B cell (primary cell): ENCODE measurements at regions of chr11 and their contacts with region 1.

Region 1: DNA sequence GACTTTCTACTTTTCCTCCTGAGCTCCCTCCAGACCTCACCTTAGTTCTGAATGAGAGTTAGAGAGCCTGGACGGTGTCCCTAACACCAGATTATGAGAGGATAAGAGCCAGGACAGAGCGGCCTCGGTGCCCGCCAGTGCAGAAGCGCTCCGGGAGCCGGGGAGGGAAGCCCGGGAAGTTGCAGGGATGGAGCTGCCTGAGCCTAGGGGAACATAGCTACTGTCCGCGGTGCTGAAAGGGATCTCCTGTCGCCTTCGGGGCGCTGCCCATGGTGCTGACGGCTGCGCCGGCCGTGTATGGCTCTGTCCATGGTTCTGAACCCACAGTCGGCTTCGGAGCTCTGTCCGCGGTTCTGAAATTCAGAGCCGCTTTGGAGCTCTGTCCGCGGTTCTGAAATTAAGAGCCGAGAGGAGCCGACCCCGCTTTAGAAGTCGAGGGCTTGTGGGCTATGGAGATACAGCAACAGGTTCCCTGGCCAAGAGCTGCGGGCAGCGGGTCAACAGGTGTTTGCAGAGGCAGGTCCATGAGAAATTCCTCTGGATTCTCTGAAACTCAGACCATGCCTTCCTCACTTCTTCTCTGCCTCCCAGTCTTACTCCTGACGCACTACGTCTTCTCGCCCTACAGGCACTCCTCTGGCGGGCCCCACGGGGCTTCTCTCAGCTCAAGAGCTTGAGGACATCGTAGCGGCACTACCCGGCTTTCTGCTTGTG is 814 bp downstream of the NPAS4 start:
- DNase-seq: peak; percentile 92
- ATAC-seq: peak; percentile 95
- H3K4me3 ChIP-seq: no peak overlapping the region
- H3K4me3 Mint-ChIP-seq: no peak overlapping the region
- H3K27ac ChIP-seq: no peak overlapping the region
- H3K27ac Mint-ChIP-seq: peak overlapping the region; percentile 81
- H3K4me1 ChIP-seq: peaks cover 8 to 15% of the 10 kb centered on the region in 2 donors
- H3K4me1 Mint-ChIP-seq: peaks cover 3% of the 10 kb centered on the region
- H3K27me3 ChIP-seq: peaks cover 0 to 45% (median 34%) of the 10 kb centered on the region in 4 experiments
- H3K27me3 Mint-ChIP-seq: peaks cover 31% of the 10 kb centered on the region
- CTCF ChIP-seq: no peak

Region 2: GRCh38 chr11:65454696-65455456 is 966.8 kb before region 1 on chr11:
- CTCF ChIA-PET with region 1: no interaction called
- POLR2A ChIA-PET with region 1: interaction called, 10 read pairs
- intact Hi-C with region 1: no loop called
- DNase-seq: peak; percentile 91
- ATAC-seq: peak; percentile 97
- H3K4me3 ChIP-seq: peak overlapping the region; percentile 63 to 80 (median 67)
- H3K4me3 Mint-ChIP-seq: peak overlapping the region; percentile 96
- H3K27ac ChIP-seq: peak overlapping the region; percentile 70
- H3K27ac Mint-ChIP-seq: peak overlapping the region; percentile 92
- H3K4me1 ChIP-seq: peaks cover 4 to 18% of the 10 kb centered on the region in 2 donors
- H3K4me1 Mint-ChIP-seq: peaks cover 32% of the 10 kb centered on the region
- H3K27me3 ChIP-seq: no peaks in the 10 kb centered on the region
- H3K27me3 Mint-ChIP-seq: no peaks in the 10 kb centered on the region
- CTCF ChIP-seq: no peak

Region 3: GRCh38 chr11:66363805-66364535 is 57.7 kb before region 1 on chr11:
- CTCF ChIA-PET with region 1: no interaction called
- POLR2A ChIA-PET with region 1: no interaction called
- intact Hi-C with region 1: no loop called
- DNase-seq: peak; percentile 53
- ATAC-seq: peak; percentile 56
- H3K4me3 ChIP-seq: no peak overlapping the region
- H3K4me3 Mint-ChIP-seq: no peak overlapping the region
- H3K27ac ChIP-seq: no peak overlapping the region
- H3K27ac Mint-ChIP-seq: no peak overlapping the region
- H3K4me1 ChIP-seq: no peaks in the 10 kb centered on the region
- H3K4me1 Mint-ChIP-seq: no peaks in the 10 kb centered on the region
- H3K27me3 ChIP-seq: no peaks in the 10 kb centered on the region
- H3K27me3 Mint-ChIP-seq: no peaks in the 10 kb centered on the region
- CTCF ChIP-seq: peak; percentile 70

Region 4: DNA sequence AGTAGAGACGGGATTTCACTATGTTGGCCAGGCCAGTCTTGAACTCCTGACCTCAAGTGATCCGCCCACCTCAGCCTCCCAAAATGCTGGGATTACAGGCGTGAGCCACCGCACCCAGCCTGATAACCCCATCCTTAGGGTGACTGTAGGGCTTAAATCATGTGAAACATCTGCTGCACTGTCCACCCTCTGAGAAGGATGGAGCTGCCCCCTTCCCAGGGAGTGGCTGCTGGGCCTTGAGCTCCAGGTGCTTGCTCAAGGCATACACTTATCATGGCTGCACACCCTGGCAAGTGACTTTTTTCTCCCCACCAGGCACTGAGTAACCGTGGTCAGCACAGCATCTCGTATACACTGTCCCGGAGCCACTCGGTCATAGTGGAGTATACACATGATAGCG is 50.4 kb after region 1 on chr11:
- CTCF ChIA-PET with region 1: interaction called, 6 read pairs
- POLR2A ChIA-PET with region 1: interaction called, 13 read pairs
- intact Hi-C with region 1: no loop called
- DNase-seq: no peak
- ATAC-seq: no peak
- H3K4me3 ChIP-seq: no peak overlapping the region
- H3K4me3 Mint-ChIP-seq: no peak overlapping the region
- H3K27ac ChIP-seq: no peak overlapping the region
- H3K27ac Mint-ChIP-seq: no peak overlapping the region
- H3K4me1 ChIP-seq: peaks cover 10 to 11% of the 10 kb centered on the region in 2 donors
- H3K4me1 Mint-ChIP-seq: peaks cover 9% of the 10 kb centered on the region
- H3K27me3 ChIP-seq: no peaks in the 10 kb centered on the region
- H3K27me3 Mint-ChIP-seq: no peaks in the 10 kb centered on the region
- CTCF ChIP-seq: no peak